Ascending aorta (tissue), 2 donors: ENCODE measurements at regions of chr9 and their contacts with region 1.

Region 1: DNA sequence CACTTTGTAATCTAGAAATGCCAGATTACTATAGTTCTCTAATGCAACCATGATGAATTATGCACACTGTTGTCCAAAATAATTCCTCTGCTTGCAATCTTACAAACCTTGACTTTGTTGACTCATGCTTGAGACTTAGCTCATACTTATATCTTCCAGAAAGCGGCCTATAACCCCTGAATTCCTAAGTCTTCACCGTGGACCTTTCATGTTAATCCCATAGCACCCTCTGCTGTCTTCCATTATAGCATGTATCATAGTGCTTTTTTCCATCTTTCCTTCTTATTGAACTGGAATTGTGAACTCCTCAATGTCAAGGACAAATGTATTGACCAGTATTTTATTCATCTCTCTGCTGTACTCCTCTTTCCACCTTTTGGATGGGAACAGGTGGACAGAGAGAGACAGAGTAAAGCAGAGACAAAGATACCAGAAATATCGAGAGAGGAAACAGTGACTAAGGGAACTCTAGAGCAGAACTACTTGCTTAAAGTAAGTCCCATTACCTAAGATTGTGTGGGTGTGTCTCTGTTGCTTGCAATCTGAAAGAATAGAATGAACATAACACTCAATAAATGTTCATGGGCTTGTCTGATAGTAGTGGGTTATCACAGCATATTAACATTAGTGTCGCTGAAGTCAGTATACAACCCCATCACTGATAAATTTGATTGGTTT is 110.1 kb downstream of the LURAP1L start:
- DNase-seq: no peak
- H3K4me3 ChIP-seq: no peak overlapping the region
- H3K27ac ChIP-seq: no peak overlapping the region
- H3K4me1 ChIP-seq: peaks cover 0 to 5% of the 10 kb centered on the region in 2 donors
- H3K27me3 ChIP-seq: no peaks in the 10 kb centered on the region
- CTCF ChIP-seq: peak; percentile 50 to 71 (median 57)

Region 2: GRCh38 chr9:12719431-12719830 is 165.4 kb before region 1 on chr9:
- intact Hi-C with region 1: loop called (anchors 1 kb)
- DNase-seq: no peak
- H3K4me3 ChIP-seq: no peak overlapping the region
- H3K27ac ChIP-seq: no peak overlapping the region
- H3K4me1 ChIP-seq: no peaks in the 10 kb centered on the region
- H3K27me3 ChIP-seq: no peaks in the 10 kb centered on the region
- CTCF ChIP-seq: peak in 2 of 3 experiments; percentile 40 to 56

Region 3: DNA sequence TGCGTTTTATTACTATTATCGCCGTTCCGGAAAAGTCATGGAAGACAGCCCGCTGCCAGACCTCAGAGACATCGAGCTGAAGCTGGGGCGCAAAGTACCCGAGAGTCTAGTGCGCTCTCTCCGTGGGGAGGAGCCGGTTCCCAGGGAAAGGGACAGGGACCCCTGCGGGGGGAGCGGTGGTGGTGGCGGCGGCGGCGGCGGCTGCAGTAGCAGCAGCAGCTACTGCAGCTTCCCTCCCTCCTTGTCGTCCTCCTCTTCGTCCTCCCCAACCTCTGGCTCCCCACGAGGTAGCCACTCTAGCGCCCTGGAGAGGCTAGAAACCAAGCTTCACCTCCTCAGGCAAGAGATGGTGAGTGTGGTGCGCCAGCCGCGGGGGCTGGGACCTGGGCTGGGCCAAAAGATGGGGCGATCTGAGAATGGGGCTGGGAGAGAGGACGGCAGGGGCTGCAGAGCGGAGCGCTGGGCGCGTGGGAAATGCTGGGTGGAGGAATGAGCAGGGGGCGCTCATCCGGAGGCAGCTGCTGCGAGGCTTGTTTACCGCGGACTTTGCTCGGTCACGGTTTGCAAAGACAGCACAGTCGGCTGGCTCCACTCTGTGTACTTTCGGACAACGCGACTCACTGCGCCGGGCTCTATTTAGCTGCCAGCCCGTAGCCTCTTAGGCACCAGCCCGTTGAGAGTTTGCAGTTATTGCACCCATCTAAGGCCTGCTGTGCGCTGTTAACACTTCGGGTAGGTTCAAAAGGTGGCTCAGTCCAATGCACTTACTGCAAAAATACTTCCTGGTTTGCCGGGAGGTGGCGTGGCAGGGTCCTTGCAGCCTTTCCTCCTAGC is 109.0 kb before region 1 on chr9:
- intact Hi-C with region 1: loop called (anchors 2 kb)
- DNase-seq: peak; percentile 51 to 69
- H3K4me3 ChIP-seq: peak overlapping the region; percentile 59 to 94
- H3K27ac ChIP-seq: peak overlapping the region; percentile 87 to 96
- H3K4me1 ChIP-seq: peaks cover 2 to 7% of the 10 kb centered on the region in 2 donors
- H3K27me3 ChIP-seq: no peaks in the 10 kb centered on the region
- CTCF ChIP-seq: peak; percentile 39 to 56 (median 53)

Region 4: DNA sequence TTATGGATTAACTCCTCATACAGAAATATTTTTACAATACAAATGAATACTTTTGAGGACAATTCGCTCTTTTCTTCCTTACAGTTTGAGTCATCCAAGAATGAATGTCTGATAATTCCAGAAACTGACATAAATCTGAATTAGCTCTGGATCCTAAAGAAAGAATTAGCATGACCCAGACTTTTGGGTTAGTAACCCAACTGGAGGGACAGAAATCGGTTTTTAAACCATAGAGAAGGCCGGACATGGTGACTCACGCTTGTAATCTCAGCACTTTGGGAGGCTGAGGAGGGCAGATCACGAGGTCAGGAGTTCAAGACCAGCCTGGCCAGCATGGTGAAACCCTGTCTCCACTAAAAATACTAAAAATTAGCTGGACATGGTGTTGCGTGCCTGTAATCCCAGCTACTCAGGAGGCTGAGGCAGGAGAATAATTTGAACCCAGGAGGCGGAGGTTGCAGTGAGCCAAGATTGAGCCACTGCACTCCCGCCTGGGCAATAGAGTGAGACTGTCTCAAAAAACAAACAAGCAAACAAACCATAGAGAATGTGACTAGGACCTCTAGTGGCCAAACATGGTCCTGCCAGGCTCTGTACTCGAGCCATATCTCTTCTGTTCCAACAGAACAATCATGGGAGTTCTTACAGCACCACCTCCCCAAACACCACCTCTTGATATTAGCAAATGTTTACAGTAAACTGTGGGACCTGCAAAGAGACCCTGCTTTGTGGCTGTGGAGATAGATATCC is 65.3 kb before region 1 on chr9:
- intact Hi-C with region 1: loop called (anchors 5 kb)
- DNase-seq: no peak
- H3K4me3 ChIP-seq: no peak overlapping the region
- H3K27ac ChIP-seq: peak overlapping the region; percentile 60 to 72
- H3K4me1 ChIP-seq: peaks cover 0 to 28% of the 10 kb centered on the region in 2 donors
- H3K27me3 ChIP-seq: no peaks in the 10 kb centered on the region
- CTCF ChIP-seq: peak in 1 of 3 experiments; percentile 17

Region 5: DNA sequence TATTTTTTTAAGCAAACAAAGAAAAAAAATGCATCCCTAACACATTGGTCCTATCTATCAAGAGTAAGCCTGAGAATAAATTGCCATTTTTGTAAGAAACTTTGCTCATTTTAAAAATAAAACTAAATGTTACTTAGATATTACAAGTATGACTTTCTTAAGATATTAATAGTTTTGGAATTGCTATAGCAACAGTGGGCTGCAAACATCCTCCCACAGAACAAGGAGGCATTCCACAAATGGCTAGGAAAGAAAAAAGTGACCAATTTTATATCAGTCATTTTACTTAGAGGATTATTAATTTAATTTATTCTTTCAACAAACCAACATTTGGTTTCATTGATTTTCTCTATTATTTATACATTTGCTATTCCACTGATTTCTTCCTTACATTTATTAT is 46.3 kb before region 1 on chr9:
- intact Hi-C with region 1: loop called (anchors 5 kb)
- DNase-seq: no peak
- H3K4me3 ChIP-seq: peak overlapping the region in 1 of 2 donors; percentile 9
- H3K27ac ChIP-seq: peak overlapping the region; percentile 56 to 71
- H3K4me1 ChIP-seq: peaks cover 0 to 4% of the 10 kb centered on the region in 2 donors
- H3K27me3 ChIP-seq: no peaks in the 10 kb centered on the region
- CTCF ChIP-seq: no peak

Region 6: GRCh38 chr9:12908931-12909608 is 24.2 kb after region 1 on chr9:
- intact Hi-C with region 1: no loop called
- DNase-seq: no peak
- H3K4me3 ChIP-seq: no peak overlapping the region
- H3K27ac ChIP-seq: no peak overlapping the region
- H3K4me1 ChIP-seq: no peaks in the 10 kb centered on the region
- H3K27me3 ChIP-seq: no peaks in the 10 kb centered on the region
- CTCF ChIP-seq: no peak

Region 7: DNA sequence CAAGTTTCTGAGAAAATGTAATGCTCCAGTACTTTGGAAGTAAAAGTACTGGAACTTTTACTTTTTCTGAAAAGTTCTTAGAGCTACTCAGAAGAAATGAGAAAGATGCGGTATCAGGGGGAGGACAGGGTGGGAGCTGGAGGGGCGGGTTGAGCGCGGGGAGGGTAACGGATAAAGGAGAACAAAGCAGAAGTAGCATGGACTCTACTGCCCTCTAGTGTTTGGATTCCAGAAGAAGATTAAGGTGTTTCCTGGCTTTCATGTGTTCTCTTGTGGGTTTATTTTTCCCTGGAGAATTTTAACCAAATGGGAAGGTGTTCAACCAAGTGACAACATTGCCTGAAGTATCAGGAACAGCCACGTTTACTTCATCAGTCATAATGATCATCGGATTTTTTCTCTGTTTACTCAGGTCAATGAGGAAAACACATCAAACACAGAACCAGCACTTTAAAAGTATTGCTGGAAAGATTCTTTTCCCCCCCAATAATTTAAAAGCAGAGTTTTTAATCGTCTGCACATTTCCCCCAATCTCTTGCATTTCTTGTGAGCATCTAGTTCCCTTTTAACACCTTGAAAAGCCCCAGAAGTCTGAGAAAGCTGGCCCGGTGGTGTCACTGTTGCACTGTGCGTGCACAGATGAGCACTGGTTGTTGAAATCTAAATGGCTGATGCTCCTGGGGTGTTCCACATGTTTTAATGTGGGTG is 204.0 kb after region 1 on chr9:
- intact Hi-C with region 1: loop called (anchors 5 kb)
- DNase-seq: no peak
- H3K4me3 ChIP-seq: peak overlapping the region in 1 of 2 donors; percentile 31
- H3K27ac ChIP-seq: no peak overlapping the region
- H3K4me1 ChIP-seq: peaks cover 0 to 7% of the 10 kb centered on the region in 2 donors
- H3K27me3 ChIP-seq: no peaks in the 10 kb centered on the region
- CTCF ChIP-seq: peak; percentile 17 to 67 (median 63)